ENCODE measurements at regions of chr10 and their contacts with region 1.

Region 1: GRCh38 chr10:43407576-43408330 is 1.2 kb downstream of the HNRNPF start:
- DNase-seq: peak; percentile 49 to 92 (median 76)
- ATAC-seq: peak; percentile 35 to 45 (median 42)
- H3K4me3 ChIP-seq: peak overlapping the region; percentile 75 to 94
- H3K4me3 Mint-ChIP-seq: peak overlapping the region; percentile 94 to 100 (median 97)
- H3K27ac ChIP-seq: peak overlapping the region; percentile 100
- H3K27ac Mint-ChIP-seq: peak overlapping the region; percentile 94 to 99
- H3K4me1 ChIP-seq: peaks cover 20 to 56% of the 10 kb centered on the region in 2 experiments
- H3K4me1 Mint-ChIP-seq: peaks cover 38 to 62% (median 44%) of the 10 kb centered on the region in 3 donors
- H3K27me3 ChIP-seq: no peaks in the 10 kb centered on the region
- H3K27me3 Mint-ChIP-seq: no peaks in the 10 kb centered on the region

Region 2: DNA sequence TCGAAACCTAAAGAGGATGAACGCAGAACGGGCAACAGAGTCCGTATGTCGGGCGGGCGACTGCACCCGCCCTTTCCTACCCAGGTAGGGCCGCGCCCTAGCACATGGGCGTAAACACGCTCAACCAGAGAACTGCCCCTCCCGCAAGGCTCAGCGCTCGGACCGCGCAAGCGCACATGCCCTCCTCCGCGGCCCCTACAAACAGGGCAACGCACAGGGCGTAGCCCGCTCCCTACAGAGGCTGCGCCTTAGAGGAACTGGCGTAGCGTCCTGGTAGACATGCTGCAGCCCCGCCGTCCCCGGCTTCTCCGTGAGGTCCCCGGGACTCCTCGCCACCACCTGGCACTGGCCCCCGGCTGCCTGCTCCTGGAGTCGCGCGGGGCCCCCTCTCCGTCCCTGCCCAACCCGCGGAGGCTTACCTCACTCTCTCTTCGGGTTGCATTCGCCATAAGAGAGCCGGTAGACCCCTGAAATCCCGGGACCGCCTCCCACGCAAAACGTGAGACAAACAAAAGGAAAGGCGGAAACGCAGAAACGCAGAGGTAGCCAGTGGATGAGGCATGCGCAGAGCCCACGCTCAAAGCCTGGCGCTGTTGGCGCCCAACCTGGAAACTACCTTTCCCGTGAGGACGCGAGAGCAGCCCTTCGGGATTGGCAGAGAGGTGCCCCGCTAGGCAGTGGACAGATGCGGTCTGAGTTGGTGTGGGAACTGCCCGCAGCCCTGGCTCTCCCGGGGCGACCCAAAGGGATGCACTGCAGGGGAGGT is 769.5 kb before region 1 on chr10 and contains the start of gene ZNF33B:
- CTCF ChIA-PET with region 1: no interaction called
- POLR2A ChIA-PET with region 1: interaction called in 1 of 2 experiments, 10 read pairs
- DNase-seq: peak; percentile 86 to 97 (median 90)
- ATAC-seq: peak; percentile 92 to 96 (median 94)
- H3K4me3 ChIP-seq: peak within 1 kb of the TSS; percentile 91 to 100
- H3K4me3 Mint-ChIP-seq: peak within 1 kb of the TSS; percentile 95 to 99 (median 98)
- H3K27ac ChIP-seq: peak within 1 kb of the TSS; percentile 96
- H3K27ac Mint-ChIP-seq: peak within 1 kb of the TSS; percentile 96 to 99
- H3K4me1 ChIP-seq: peaks cover 7 to 28% of the 10 kb centered on the region in 2 experiments
- H3K4me1 Mint-ChIP-seq: peaks cover 45 to 51% (median 51%) of the 10 kb centered on the region in 3 donors
- H3K27me3 ChIP-seq: no peaks in the 10 kb centered on the region
- H3K27me3 Mint-ChIP-seq: no peaks in the 10 kb centered on the region
- total RNA-seq, gene ZNF33B: 26.4 to 61.6 (median 57.7) TPM

Region 3: DNA sequence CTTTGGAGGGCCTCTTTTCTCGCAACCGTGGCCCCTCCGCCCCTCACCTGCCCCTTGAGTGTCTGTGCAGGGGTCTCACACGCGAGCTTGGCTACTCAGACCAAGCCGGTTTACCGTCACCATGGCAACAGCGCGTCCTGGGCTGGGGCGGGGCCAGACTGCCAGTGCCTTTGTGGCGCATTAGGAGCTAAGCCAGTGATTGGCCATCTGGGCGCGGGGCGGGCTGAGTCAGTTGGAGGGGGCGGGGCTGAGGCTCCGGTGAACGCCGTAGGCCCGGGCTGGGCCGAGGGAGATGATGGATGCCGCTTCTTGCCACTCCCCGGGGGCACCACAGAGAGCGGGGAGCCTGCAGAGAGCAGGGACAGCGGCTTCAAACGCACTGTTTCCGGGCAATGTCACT is 85.0 kb before region 1 on chr10:
- CTCF ChIA-PET with region 1: no interaction called
- POLR2A ChIA-PET with region 1: no interaction called
- DNase-seq: peak; percentile 40 to 90 (median 78)
- ATAC-seq: peak; percentile 87 to 99 (median 93)
- H3K4me3 ChIP-seq: peak overlapping the region in 1 of 2 donors; percentile 16
- H3K4me3 Mint-ChIP-seq: peak overlapping the region in 2 of 3 donors; percentile 6 to 57
- H3K27ac ChIP-seq: no peak overlapping the region
- H3K27ac Mint-ChIP-seq: no peak overlapping the region
- H3K4me1 ChIP-seq: peaks cover 0 to 13% of the 10 kb centered on the region in 2 experiments
- H3K4me1 Mint-ChIP-seq: peaks cover 15 to 25% (median 19%) of the 10 kb centered on the region in 3 donors
- H3K27me3 ChIP-seq: peaks cover 0 to 16% of the 10 kb centered on the region in 2 experiments
- H3K27me3 Mint-ChIP-seq: peaks cover 0 to 18% of the 10 kb centered on the region in 2 donors